GM18951 (cell line): ENCODE measurements at regions of chr15 and their contacts with region 1.

Region 1: DNA sequence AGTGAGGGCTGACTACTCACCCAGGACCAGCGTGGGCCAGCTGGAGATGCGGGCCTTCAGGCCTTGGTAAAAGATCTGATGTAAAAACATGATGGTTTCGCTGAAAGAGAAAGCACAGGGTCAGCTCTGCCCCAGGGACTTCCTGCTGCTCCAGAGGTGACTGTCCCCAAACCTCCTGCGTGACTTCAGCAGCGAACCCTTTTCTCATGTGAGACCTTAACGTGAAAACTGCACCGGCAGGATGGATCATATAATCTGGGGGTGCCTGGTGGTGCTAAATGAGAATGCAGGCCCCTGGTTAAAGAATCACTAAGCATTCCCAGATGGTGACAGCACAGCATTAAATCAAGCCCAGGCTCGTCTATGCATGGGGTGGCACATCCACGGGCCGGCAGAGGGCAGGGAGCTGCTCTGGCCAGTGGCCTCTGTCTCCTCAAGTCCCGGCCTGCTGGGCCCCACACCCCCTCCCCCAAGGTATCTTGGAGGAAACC is 55.4 kb downstream of the RASGRF1 start:
- POLR2A ChIP-seq: no peak

Region 2: DNA sequence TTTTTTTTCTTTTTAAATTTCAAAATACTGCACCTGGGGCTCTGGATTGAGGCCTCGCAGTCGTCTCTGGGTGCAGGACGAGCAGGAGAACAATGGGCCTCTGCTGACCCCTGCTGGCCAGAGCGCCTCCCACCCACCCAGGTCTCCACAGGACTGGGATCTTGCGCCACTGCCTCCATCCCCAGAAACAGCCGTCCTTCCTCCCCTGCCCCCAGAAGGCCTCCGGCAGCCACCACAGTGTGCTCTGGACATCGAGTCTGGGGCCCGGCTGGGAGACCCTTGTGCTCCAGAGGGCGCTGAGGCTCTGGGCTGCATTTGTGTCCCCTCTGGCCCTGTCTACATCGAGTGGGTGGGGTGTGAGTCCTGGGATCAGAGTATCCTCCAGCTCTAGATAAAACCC is 794.1 kb before region 1 on chr15:
- in situ Hi-C with region 1: no loop called
- POLR2A ChIP-seq: no peak

Region 3: GRCh38 chr15:79184465-79184892 is 149.3 kb after region 1 on chr15:
- in situ Hi-C with region 1: loop called (anchors 5 kb)
- POLR2A ChIP-seq: no peak

Region 4: GRCh38 chr15:79233236-79233635 is 198.1 kb after region 1 on chr15:
- in situ Hi-C with region 1: no loop called
- POLR2A ChIP-seq: no peak

Region 5: DNA sequence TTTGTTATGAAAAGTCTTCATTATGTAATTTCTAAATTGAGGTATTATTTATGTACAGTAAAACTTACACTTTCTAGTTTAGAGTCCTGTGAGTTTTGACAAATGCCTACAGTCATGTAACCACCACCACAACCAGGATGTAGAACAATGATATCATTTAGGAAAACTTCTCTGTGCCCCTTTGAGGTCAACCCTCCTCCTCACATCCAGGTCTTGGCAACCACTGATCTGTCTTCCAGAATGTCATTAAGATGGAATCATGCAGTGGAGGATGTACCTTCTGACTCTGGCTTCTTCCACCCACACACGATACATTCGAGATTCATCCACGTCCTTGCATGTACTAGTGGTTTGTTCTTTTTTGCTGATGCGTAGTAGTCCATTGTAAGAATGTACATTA is 420.2 kb after region 1 on chr15:
- in situ Hi-C with region 1: no loop called
- POLR2A ChIP-seq: no peak